Activated naive CD4-positive, alpha-beta T cell treated with anti-CD3 and anti-CD28 coated beads for 36 hours (primary cell): ENCODE measurements at regions of chr10 and their contacts with region 1.

Region 1: DNA sequence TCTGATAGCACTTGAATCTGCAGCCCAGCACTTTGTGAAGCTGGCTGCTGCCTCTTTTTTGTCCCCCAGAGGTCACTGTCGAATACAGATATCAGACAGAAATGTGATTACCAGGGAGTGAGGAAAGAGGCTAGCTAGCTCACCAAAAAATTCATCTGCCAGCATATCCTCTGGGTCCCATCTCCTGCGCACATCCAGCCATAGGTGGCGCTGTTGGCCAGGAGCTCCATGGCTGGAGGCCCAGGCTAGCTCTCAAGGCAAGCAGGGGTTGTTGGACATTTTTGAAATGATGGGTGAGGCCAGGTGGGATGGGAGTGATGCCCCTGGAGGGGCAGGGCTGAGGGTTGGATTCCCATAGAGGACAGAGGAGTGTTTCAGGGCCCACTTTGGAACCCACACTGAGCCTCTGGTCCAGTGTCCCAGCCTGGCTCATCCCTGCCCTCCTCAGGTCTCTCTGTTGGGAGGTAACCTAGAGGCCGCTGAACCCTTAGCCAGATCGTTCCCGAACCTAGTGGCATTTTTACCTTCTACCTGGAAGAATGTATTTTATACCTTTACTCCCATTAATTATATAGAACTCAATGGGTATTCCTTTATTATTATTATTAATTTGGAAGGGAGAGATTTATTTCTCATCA is 14.8 kb downstream of the DPCD start:
- DNase-seq: peak; percentile 90
- H3K4me3 Mint-ChIP-seq: no peak overlapping the region
- H3K27ac Mint-ChIP-seq: no peak overlapping the region
- H3K4me1 Mint-ChIP-seq: no peaks in the 10 kb centered on the region
- H3K27me3 Mint-ChIP-seq: no peaks in the 10 kb centered on the region

Region 2: DNA sequence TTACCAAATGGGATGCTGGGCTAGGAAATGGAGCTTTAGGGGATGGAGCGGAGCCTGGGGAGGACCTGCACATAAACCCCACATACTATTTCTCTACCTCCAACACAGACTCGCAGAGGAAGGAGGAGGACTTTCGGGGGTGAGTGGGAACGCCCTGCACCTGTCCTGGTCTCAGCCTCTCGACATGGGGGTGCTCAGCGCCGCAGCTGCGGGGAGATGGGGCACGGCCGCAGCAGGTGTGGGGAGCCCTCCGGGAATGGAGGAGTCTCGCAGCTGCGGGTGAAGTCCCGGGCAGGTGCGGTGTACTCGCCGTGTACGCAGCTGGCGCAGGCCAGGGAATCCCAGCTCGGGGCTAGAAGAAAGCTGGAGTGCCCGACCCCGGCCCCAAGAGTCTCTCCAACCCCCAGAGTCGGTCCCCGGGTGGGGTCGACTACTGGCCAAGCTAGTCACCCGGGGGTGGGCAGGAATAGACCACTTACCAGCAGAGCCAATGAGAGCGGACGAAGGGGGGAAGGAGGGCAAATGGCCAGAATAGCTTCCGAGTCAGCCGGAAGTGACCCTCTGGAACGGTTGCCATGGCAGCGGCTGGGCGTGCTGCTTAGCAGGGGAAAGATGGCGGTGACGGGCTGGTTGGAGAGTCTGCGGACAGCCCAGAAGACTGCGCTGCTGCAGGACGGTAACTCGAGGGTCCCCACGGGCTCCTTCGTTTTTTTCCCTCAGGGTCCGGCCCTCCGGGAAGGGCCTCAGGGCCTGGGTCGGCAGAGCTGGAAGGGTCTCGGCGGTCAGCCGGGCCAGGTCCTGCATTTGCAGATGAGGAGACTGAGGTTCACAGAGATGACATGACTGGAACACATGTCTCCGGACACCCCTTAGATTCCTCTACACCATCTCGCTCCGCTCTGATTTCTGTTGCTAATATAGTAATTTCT is 14.9 kb before region 1 on chr10 and contains the starts of genes DPCD and POLL:
- CTCF ChIA-PET with region 1: interaction called, 12 read pairs
- intact Hi-C with region 1: no loop called
- DNase-seq: peak; percentile 97
- H3K4me3 Mint-ChIP-seq: peak within 1 kb of the TSS; percentile 91
- H3K27ac Mint-ChIP-seq: peak within 1 kb of the TSS; percentile 78
- H3K4me1 Mint-ChIP-seq: peaks cover 21% of the 10 kb centered on the region
- H3K27me3 Mint-ChIP-seq: no peaks in the 10 kb centered on the region
- total RNA-seq, gene DPCD: 13.8 to 14.1 TPM
- total RNA-seq, gene POLL: 28.1 to 29.0 TPM

Region 3: DNA sequence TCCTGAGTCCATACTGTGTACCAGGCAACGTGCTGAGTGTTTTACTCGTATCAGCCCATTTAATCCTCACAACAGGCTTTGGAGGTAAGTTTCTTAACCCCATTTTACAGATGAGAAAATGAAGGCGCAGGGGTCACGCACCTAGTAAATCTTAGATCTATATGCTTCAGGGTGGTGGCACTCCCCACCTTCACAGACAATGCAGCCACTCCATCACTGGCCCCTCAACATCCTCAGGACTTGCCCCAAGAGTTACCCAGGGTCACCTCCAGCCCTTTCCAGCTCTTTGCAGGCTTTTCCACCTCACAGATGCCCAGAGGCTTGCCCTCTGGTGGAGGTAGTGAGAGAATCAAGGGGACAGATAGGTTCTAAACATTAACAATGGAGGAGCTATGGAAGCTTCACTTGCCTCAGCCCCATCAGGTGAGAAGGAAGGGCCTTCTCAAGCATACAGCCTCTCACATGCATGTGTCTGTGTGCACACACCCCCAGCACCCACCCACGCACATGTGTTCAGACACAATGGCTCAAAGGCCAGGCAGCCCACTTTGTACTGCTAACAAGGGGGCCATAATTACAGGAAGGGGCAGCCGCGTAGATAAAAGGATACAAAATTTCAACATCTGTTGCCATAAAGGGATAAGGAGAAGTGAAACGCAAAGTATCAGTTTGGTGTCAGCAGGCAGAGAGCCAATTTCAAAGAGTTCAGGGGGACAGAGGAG is 14.4 kb after region 1 on chr10:
- CTCF ChIA-PET with region 1: interaction called, 11 read pairs
- intact Hi-C with region 1: no loop called
- DNase-seq: no peak
- H3K4me3 Mint-ChIP-seq: no peak overlapping the region
- H3K27ac Mint-ChIP-seq: no peak overlapping the region
- H3K4me1 Mint-ChIP-seq: no peaks in the 10 kb centered on the region
- H3K27me3 Mint-ChIP-seq: no peaks in the 10 kb centered on the region

Region 4: GRCh38 chr10:101646364-101646763 is 43.5 kb after region 1 on chr10:
- CTCF ChIA-PET with region 1: no interaction called
- intact Hi-C with region 1: loop called (anchors 2 kb)
- DNase-seq: no peak
- H3K4me3 Mint-ChIP-seq: no peak overlapping the region
- H3K27ac Mint-ChIP-seq: no peak overlapping the region
- H3K4me1 Mint-ChIP-seq: peaks cover 2% of the 10 kb centered on the region
- H3K27me3 Mint-ChIP-seq: no peaks in the 10 kb centered on the region

Region 5: GRCh38 chr10:101720611-101721230 is 117.8 kb after region 1 on chr10:
- CTCF ChIA-PET with region 1: no interaction called
- intact Hi-C with region 1: loop called (anchors 1 kb)
- DNase-seq: no peak
- H3K4me3 Mint-ChIP-seq: no peak overlapping the region
- H3K27ac Mint-ChIP-seq: no peak overlapping the region
- H3K4me1 Mint-ChIP-seq: peaks cover 16% of the 10 kb centered on the region
- H3K27me3 Mint-ChIP-seq: peaks cover 15% of the 10 kb centered on the region